CD8-positive, alpha-beta T cell (primary cell): ENCODE measurements at regions of chr14 and their contacts with region 1.

Region 1: GRCh38 chr14:63770187-63770807 is 42.4 kb upstream of the SGPP1 start:
- DNase-seq: peak; percentile 6 to 79 (median 60)
- ATAC-seq: peak; percentile 90
- H3K4me3 ChIP-seq: no peak overlapping the region
- H3K4me3 Mint-ChIP-seq: no peak overlapping the region
- H3K27ac ChIP-seq: no peak overlapping the region
- H3K27ac Mint-ChIP-seq: no peak overlapping the region
- H3K4me1 ChIP-seq: no peaks in the 10 kb centered on the region
- H3K4me1 Mint-ChIP-seq: peaks cover 3% of the 10 kb centered on the region
- H3K27me3 ChIP-seq: no peaks in the 10 kb centered on the region
- H3K27me3 Mint-ChIP-seq: no peaks in the 10 kb centered on the region
- CTCF ChIP-seq: peak; percentile 70

Region 2: DNA sequence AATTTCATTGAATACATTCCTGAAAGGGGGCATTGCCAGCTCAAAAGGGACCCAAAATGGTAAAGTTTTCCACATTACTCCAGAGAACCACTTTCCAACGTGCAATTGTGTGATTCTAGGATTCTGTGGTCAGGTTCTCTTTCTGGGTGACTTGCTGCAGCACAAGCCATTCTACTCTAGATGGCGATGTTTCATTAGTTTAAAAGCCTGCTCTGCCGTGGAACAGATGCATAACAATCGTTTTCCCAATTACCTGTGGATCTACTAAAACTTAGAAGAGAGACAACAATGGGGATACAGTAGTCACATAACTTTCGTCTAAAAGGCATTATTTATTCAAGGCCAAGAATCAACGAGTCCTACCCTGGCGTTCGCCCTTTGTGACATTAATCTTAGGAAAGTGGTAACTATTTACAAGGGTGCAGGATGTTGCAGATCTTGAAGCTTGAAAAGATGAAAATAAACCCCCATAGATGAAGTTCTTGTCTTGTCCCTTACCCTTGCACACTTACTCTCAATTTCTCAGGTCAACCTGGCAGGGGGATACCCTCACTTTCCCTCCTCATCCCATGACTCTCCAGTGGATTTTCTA is 1607.2 kb before region 1 on chr14:
- CTCF ChIA-PET with region 1: no interaction called
- POLR2A ChIA-PET with region 1: no interaction called
- intact Hi-C with region 1: loop called in 1 of 2 experiments (anchors 5 kb)
- DNase-seq: peak in 2 of 9 experiments; percentile 28 to 39
- ATAC-seq: no peak
- H3K4me3 ChIP-seq: no peak overlapping the region
- H3K4me3 Mint-ChIP-seq: no peak overlapping the region
- H3K27ac ChIP-seq: no peak overlapping the region
- H3K27ac Mint-ChIP-seq: no peak overlapping the region
- H3K4me1 ChIP-seq: no peaks in the 10 kb centered on the region
- H3K4me1 Mint-ChIP-seq: no peaks in the 10 kb centered on the region
- H3K27me3 ChIP-seq: peaks cover 0 to 5% of the 10 kb centered on the region in 2 experiments
- H3K27me3 Mint-ChIP-seq: peaks cover 20% of the 10 kb centered on the region
- CTCF ChIP-seq: peak; percentile 42

Region 3: DNA sequence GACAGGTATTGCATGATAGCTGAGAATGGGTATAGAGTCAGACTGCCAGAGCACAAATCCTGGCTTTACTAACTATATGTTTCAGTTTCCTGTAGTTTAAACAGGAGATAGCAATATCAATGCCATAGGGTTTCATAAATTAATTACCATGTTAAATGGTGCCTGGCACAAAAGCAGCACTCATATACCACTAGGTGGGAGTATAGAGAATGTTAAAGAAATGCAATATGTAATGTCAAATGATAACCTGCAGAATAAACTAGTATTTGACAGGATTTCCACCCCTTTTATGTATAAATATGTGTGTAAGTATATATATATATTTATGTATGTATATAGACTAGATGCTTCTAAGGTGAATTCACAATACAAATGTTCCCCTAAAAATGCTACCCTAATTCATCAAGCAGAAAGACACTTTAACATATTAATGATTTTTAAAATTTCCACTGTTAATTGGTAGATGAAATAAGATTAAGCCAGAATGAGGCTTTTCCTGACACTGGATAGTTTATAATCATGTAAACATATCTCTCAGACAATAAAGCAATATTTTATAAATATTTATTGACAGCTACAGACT is 137.3 kb before region 1 on chr14:
- CTCF ChIA-PET with region 1: interaction called, 126 read pairs
- POLR2A ChIA-PET with region 1: interaction called, 5 read pairs
- intact Hi-C with region 1: loop called (anchors 1 kb)
- DNase-seq: peak in 2 of 9 experiments; percentile 52 to 69
- ATAC-seq: peak; percentile 94
- H3K4me3 ChIP-seq: no peak overlapping the region
- H3K4me3 Mint-ChIP-seq: no peak overlapping the region
- H3K27ac ChIP-seq: no peak overlapping the region
- H3K27ac Mint-ChIP-seq: no peak overlapping the region
- H3K4me1 ChIP-seq: peaks cover 12% of the 10 kb centered on the region
- H3K4me1 Mint-ChIP-seq: peaks cover 56% of the 10 kb centered on the region
- H3K27me3 ChIP-seq: no peaks in the 10 kb centered on the region
- H3K27me3 Mint-ChIP-seq: no peaks in the 10 kb centered on the region
- CTCF ChIP-seq: peak; percentile 95

Region 4: GRCh38 chr14:63650256-63650952 is 119.9 kb before region 1 on chr14:
- CTCF ChIA-PET with region 1: interaction called, 14 read pairs
- POLR2A ChIA-PET with region 1: interaction called, 5 read pairs
- intact Hi-C with region 1: no loop called
- DNase-seq: peak; percentile 19 to 87 (median 65)
- ATAC-seq: peak; percentile 96
- H3K4me3 ChIP-seq: peak overlapping the region; percentile 10 to 26
- H3K4me3 Mint-ChIP-seq: peak overlapping the region; percentile 69
- H3K27ac ChIP-seq: peak overlapping the region; percentile 78 to 93
- H3K27ac Mint-ChIP-seq: peak overlapping the region; percentile 100
- H3K4me1 ChIP-seq: peaks cover 40% of the 10 kb centered on the region
- H3K4me1 Mint-ChIP-seq: peaks cover 52% of the 10 kb centered on the region
- H3K27me3 ChIP-seq: no peaks in the 10 kb centered on the region
- H3K27me3 Mint-ChIP-seq: no peaks in the 10 kb centered on the region
- CTCF ChIP-seq: no peak

Region 5: GRCh38 chr14:63757211-63757610 is 13.1 kb before region 1 on chr14:
- CTCF ChIA-PET with region 1: interaction called, 16 read pairs
- POLR2A ChIA-PET with region 1: no interaction called
- intact Hi-C with region 1: no loop called
- DNase-seq: no peak
- ATAC-seq: no peak
- H3K4me3 ChIP-seq: no peak overlapping the region
- H3K4me3 Mint-ChIP-seq: no peak overlapping the region
- H3K27ac ChIP-seq: no peak overlapping the region
- H3K27ac Mint-ChIP-seq: no peak overlapping the region
- H3K4me1 ChIP-seq: peaks cover 7% of the 10 kb centered on the region
- H3K4me1 Mint-ChIP-seq: peaks cover 10% of the 10 kb centered on the region
- H3K27me3 ChIP-seq: peaks cover 0 to 2% of the 10 kb centered on the region in 2 experiments
- H3K27me3 Mint-ChIP-seq: no peaks in the 10 kb centered on the region
- CTCF ChIP-seq: no peak

Region 6: DNA sequence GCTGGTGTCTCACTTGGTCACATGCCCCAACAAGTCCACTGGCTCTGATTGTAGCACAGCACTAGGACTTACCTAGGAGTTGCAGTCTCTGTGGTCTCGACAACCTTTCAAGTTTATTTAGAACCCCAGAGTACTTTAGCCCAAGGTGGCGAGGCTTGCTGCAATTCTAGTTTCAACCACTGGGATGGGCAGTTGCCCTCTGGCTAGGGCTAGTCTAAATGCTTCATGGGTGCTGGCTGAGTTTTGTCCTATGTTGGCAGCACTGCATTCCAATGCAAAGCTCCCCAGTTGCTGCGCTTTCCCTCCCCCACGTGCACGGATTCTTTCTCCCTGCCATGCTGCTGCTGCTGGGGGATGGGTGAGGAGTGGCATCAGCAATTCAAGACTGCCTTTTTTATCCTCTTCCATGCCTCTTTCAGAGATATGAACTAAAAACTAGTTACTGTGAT is 290.4 kb after region 1 on chr14:
- CTCF ChIA-PET with region 1: no interaction called
- POLR2A ChIA-PET with region 1: no interaction called
- intact Hi-C with region 1: no loop called
- DNase-seq: peak in 2 of 9 experiments; percentile 9 to 10
- ATAC-seq: no peak
- H3K4me3 ChIP-seq: no peak overlapping the region
- H3K4me3 Mint-ChIP-seq: no peak overlapping the region
- H3K27ac ChIP-seq: no peak overlapping the region
- H3K27ac Mint-ChIP-seq: no peak overlapping the region
- H3K4me1 ChIP-seq: no peaks in the 10 kb centered on the region
- H3K4me1 Mint-ChIP-seq: no peaks in the 10 kb centered on the region
- H3K27me3 ChIP-seq: no peaks in the 10 kb centered on the region
- H3K27me3 Mint-ChIP-seq: no peaks in the 10 kb centered on the region
- CTCF ChIP-seq: no peak

Region 7: DNA sequence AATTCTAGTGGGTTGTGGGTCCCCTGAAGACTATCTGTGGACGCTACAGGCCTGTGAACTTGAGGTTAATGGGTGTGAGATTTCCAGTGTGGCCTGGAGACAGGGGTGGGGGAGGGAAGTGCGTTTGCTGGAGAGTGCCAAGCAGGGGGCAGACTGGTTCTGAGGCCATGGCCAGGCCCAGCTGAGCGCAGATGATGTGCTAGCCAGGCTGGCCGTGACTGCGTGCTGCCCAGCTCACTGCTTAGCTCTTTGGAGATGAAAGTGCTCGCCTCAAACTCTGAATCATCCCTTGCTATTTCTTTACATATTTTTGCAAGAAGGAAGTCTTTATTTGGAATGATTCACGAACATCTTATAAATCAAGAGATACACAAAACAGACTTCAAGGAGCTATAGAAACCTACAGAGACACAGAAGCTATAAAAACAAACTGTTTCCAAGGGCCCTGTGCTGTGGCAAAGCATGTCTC is 858.7 kb after region 1 on chr14:
- CTCF ChIA-PET with region 1: no interaction called
- POLR2A ChIA-PET with region 1: no interaction called
- intact Hi-C with region 1: no loop called
- DNase-seq: no peak
- ATAC-seq: no peak
- H3K4me3 ChIP-seq: no peak overlapping the region
- H3K4me3 Mint-ChIP-seq: no peak overlapping the region
- H3K27ac ChIP-seq: no peak overlapping the region
- H3K27ac Mint-ChIP-seq: no peak overlapping the region
- H3K4me1 ChIP-seq: no peaks in the 10 kb centered on the region
- H3K4me1 Mint-ChIP-seq: no peaks in the 10 kb centered on the region
- H3K27me3 ChIP-seq: no peaks in the 10 kb centered on the region
- H3K27me3 Mint-ChIP-seq: peaks cover 2% of the 10 kb centered on the region
- CTCF ChIP-seq: no peak